PC-9 (cell line): ENCODE measurements at regions of chr6 and their contacts with region 1.

Region 1: GRCh38 chr6:47103931-47104330 is 61.8 kb upstream of the ADGRF1 start:
- DNase-seq: peak; percentile 46 to 91
- H3K4me3 ChIP-seq: peak overlapping the region; percentile 22; the same call in 1 of the 2 replicates
- H3K27ac ChIP-seq: peak overlapping the region; percentile 96
- H3K4me1 ChIP-seq: peaks cover 69% of the 10 kb centered on the region
- H3K27me3 ChIP-seq: no peaks in the 10 kb centered on the region
- CTCF ChIP-seq: no peak

Region 2: DNA sequence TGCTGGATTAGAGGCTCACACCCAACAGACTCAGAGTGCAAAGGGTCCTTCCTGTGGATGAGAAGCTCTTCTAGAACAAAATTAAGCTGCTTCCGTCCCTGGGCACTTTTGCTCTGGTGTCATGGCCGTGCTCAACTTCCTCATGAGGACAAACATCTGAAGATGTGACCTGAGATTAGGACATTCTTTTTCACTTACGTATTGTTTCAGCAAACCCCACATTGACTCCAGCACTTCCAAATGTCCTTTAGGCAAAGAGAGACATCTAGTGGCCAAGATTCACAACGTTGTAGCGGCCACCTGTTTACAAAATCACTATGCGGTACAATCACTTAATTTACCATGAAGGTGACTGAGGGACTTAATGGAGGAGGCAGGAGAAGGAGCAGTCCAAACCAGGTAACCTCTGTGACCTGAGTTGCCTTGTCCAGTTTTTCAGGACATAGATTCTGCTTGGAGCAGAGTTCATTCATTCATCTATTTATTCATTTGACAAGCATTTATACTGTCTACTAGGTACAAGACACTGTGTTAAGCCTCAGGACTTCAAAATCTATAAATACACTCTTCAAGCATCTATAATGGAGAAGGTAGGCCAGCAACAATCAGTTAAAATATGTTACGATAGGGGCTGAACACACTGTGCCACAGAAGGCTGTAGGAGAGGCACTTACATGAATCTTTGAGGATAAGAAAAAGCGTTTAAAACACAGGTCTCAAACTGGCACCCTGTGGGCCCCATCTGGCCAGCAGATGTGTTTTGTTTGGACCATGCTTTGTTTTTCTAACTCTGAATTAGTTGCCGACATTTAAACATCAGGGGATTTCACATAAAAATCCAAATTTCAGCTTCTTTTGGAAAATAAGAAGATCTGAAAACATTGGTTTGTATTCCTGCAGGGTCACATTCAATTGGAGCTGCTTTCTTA is 56.2 kb before region 1 on chr6:
- CTCF ChIA-PET with region 1: no interaction called
- POLR2A ChIA-PET with region 1: interaction called, 11 read pairs
- intact Hi-C with region 1: loop called (anchors 2 kb)
- DNase-seq: peak; percentile 72 to 99
- H3K4me3 ChIP-seq: no peak overlapping the region; the same call in 1 of the 2 replicates
- H3K27ac ChIP-seq: peak overlapping the region; percentile 98
- H3K4me1 ChIP-seq: peaks cover 60% of the 10 kb centered on the region
- H3K27me3 ChIP-seq: no peaks in the 10 kb centered on the region
- CTCF ChIP-seq: peak; percentile 80

Region 3: DNA sequence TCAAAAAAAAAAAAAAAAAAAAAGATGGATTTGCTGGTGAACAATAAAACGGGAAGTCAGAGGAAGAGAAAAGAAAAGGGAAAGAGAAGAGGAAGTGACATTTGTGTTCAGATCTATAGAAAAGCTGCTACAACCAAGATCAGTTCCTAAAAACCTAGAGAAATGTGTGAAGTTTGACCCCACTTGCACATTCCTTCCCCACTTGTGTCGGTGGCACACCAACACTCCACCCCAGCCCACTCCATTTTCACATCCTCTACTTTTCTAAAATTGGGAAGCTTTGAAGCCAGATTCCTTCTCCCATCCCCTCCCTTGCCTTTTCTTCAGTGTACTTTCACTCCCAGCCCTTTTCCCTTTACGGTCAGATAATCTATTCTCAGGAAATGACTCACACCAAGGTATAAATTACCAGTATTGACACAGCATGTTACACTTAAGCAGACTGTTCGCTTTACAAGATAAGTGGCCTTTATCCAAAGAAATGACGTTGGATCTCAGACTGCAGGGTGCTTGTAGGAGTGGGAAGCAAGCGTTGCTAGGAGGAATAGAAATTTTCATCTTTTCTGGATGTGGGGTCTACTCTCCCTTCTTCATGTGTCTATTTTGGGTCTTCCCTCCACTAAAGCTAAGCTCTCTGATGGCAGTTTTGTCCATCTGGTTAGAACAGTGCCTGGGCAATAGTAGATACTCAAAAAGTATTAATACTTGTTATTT is 30.7 kb after region 1 on chr6:
- CTCF ChIA-PET with region 1: no interaction called
- POLR2A ChIA-PET with region 1: interaction called, 12 read pairs
- intact Hi-C with region 1: loop called (anchors 1 kb)
- DNase-seq: peak; percentile 46 to 98
- H3K4me3 ChIP-seq: peak overlapping the region; percentile 43; the same call in 1 of the 2 replicates
- H3K27ac ChIP-seq: peak overlapping the region; percentile 100
- H3K4me1 ChIP-seq: peaks cover 73% of the 10 kb centered on the region
- H3K27me3 ChIP-seq: no peaks in the 10 kb centered on the region
- CTCF ChIP-seq: no peak

Region 4: DNA sequence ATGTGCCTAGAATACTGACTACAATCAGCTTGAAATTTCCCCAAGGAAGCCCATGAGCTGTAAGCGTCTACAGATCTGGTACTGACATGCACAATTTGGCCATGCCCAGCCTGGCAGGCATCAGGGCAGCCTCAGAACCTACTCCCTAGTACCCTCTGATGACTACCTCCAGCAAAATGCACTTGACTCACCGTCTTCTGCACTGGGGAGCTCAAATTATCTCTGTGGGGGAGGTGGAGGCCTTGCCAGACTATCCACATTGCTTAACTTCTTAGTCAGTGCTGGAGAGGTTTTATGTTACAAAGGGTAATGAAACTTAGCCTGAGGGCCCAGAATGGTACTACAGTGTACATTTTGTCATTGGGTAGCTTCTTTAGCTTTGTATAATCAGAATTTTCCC is 64.3 kb after region 1 on chr6:
- CTCF ChIA-PET with region 1: no interaction called
- POLR2A ChIA-PET with region 1: interaction called, 7 read pairs
- intact Hi-C with region 1: loop called (anchors 1 kb)
- DNase-seq: peak; percentile 87 to 98
- H3K4me3 ChIP-seq: no peak overlapping the region
- H3K27ac ChIP-seq: peak overlapping the region; percentile 93
- H3K4me1 ChIP-seq: peaks cover 66% of the 10 kb centered on the region
- H3K27me3 ChIP-seq: no peaks in the 10 kb centered on the region
- CTCF ChIP-seq: no peak

Region 5: GRCh38 chr6:47256361-47256760 is 152.4 kb after region 1 on chr6:
- CTCF ChIA-PET with region 1: no interaction called
- POLR2A ChIA-PET with region 1: interaction called, 10 read pairs
- intact Hi-C with region 1: no loop called
- DNase-seq: no peak
- H3K4me3 ChIP-seq: no peak overlapping the region
- H3K27ac ChIP-seq: peak overlapping the region; percentile 42
- H3K4me1 ChIP-seq: peaks cover 23% of the 10 kb centered on the region
- H3K27me3 ChIP-seq: no peaks in the 10 kb centered on the region
- CTCF ChIP-seq: no peak